Keratinocyte (primary cell): ENCODE measurements at regions of chr7 and their contacts with region 1.

Region 1: DNA sequence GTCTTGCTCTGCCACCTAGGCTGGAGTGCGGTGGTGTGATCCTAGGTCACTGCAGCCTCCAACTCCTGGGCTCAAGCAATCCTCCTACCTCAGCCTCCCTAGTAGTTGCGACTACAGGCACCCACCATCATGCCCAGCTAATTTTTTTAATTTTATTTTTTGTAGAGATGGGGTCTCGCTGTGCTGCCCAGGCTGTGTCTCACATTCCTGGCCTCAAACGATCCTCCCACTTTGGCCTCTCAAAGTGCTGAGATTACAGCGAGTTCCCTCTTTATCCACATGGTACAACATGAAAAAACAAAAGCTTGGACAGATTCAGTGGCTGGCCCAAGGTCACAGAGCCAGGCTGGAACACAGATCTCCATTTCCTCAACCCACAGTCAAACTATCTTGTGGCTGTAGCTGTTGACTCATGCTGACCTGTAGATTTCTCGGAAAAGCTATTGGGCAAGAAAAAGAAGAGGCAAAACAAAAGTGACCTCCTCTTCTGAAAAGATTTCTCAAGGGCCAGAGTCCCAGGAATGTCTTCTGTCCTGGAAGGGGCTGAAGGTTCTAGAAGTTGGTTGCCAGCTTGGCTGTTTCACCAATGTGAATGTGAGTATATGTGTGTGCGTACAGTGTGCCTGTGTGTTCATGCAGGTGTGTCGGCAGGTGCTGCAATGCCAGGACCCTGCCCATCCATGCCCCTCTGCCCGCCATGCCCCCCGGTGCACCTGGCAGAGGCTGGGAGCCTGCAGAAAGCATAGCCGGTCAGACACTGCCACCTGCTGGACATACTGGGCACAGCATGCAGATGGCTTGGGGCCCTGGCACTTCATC is 28.4 kb downstream of the TMEM130 start:
- DNase-seq: no peak
- H3K4me3 ChIP-seq: no peak overlapping the region
- H3K27ac ChIP-seq: no peak overlapping the region
- H3K4me1 ChIP-seq: no peaks in the 10 kb centered on the region
- H3K27me3 ChIP-seq: peaks cover 2% of the 10 kb centered on the region
- CTCF ChIP-seq: peak; percentile 87 to 98 (median 94)

Region 2: GRCh38 chr7:98470485-98471240 is 370.7 kb before region 1 on chr7:
- dilution Hi-C with region 1: loop called (anchors 25 kb)
- DNase-seq: no peak
- H3K4me3 ChIP-seq: no peak overlapping the region
- H3K27ac ChIP-seq: no peak overlapping the region
- H3K4me1 ChIP-seq: no peaks in the 10 kb centered on the region
- H3K27me3 ChIP-seq: peaks cover 4% of the 10 kb centered on the region
- CTCF ChIP-seq: no peak